ENCODE measurements at regions of chr2 and their contacts with region 1.

Region 1: DNA sequence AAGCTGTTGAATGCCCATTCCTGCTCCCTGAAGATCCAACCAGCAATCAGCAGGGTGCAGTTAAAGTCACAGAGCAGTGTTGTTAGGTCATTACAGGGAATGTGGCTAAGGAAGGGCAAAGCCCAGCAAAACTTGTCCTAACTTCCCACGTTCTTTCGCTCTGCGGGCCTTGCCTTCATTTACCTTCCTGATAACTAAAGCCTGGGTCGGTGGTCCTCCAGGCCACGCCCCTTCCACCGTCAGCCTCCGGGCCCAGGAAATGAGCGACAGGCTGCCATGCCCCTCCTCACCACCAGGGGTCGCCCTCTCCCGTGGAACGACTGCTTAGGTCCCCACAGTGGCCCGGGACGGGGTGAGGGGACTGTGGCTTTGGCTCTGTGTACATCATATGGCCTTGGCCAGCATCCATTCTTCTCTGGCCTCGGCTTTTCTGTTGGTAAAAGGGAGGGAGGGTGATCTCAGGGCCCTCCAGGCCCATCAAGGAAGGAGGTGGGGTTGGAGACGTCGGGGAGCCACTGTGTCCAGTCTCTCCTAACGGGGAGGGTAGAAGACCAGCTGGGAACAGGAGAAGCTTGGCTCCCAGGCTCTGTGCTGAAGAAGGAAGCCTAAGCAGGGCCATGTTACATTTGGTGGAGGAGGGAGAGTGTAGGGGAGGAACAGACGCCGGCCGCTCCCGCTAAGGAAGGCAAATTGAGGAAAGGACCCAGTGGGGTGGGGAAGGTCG is 2.2 kb downstream of the SH2D6 start:
- DNase-seq: peak; percentile 88 to 92
- ATAC-seq: peak; percentile 74 to 86 (median 80)
- H3K4me3 ChIP-seq: peak overlapping the region in 6 of 10 donors; percentile 13 to 41 (median 28)
- H3K27ac ChIP-seq: peak overlapping the region; percentile 47 to 97 (median 83)
- H3K4me1 ChIP-seq: peaks cover 15 to 43% (median 34%) of the 10 kb centered on the region in 9 donors
- H3K27me3 ChIP-seq: no peaks in the 10 kb centered on the region
- CTCF ChIP-seq: peak; percentile 100

Region 2: GRCh38 chr2:85189606-85190270 is 231.0 kb before region 1 on chr2:
- intact Hi-C with region 1: no loop called
- DNase-seq: no peak
- ATAC-seq: no peak
- H3K4me3 ChIP-seq: no peak overlapping the region
- H3K27ac ChIP-seq: no peak overlapping the region
- H3K4me1 ChIP-seq: peaks cover 0 to 28% (median 8%) of the 10 kb centered on the region in 9 donors
- H3K27me3 ChIP-seq: no peaks in the 10 kb centered on the region
- CTCF ChIP-seq: no peak

Region 3: GRCh38 chr2:85288244-85288725 is 132.4 kb before region 1 on chr2:
- intact Hi-C with region 1: no loop called
- DNase-seq: no peak
- ATAC-seq: no peak
- H3K4me3 ChIP-seq: no peak overlapping the region
- H3K27ac ChIP-seq: no peak overlapping the region
- H3K4me1 ChIP-seq: peaks cover 0 to 18% (median 12%) of the 10 kb centered on the region in 9 donors
- H3K27me3 ChIP-seq: no peaks in the 10 kb centered on the region
- CTCF ChIP-seq: no peak

Region 4: DNA sequence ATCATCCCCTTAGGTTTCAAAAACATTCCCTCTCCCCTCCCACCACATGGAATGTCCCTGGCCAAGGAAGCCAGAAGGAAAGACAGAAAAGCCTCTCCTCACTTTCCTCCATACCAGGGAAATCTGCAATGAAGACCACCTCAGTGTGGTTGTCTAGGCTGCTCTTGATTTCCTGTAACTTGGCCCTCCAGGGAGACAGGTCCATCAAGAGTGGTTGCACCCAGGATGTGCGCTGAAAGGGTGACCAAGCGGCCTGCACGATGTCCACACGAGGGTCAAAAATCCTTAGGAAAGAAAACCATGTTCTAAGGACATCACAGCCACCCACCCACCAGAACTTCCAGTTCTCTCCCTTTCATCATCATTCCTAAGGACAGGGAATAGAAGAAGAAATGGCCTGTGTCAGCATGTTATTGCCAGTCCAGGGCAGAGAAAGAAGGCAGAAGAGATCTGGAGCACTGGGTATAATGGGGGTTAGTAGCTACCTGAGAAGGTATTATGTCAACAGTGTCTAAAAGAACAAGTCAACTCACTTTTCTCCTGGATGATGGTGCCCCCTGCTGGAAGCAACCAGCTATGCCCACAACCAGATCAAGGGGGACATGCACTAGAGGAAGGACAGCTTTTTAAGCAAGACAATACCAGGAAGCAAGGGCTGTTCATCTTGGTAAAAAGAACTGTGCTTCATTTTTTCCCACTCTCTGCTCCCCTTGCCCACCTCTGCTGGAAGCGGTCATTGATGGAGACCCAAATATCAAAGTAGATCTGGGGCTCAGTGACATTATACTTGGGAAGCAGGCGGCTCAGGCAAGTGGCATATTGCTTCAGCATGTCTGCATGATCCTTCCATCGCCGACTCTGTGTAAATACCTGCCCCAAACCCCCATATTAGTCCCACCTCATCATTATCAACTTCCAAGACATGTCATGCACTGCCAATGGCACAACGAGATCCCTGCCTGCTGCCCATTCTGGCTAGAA is 131.3 kb after region 1 on chr2:
- intact Hi-C with region 1: loop called (anchors 1 to 2 kb)
- DNase-seq: peak; percentile 74 to 84
- ATAC-seq: peak; percentile 38 to 84 (median 78)
- H3K4me3 ChIP-seq: no peak overlapping the region
- H3K27ac ChIP-seq: no peak overlapping the region
- H3K4me1 ChIP-seq: peaks cover 0 to 26% (median 0%) of the 10 kb centered on the region in 9 donors
- H3K27me3 ChIP-seq: no peaks in the 10 kb centered on the region
- CTCF ChIP-seq: peak; percentile 83 to 96 (median 94)

Measured in heart right ventricle (tissue), 16 donors.